ENCODE measurements at regions of chr11 and their contacts with region 1.

Region 1: GRCh38 chr11:97454988-97455387 is 1065.2 kb downstream of the JRKL start:
- DNase-seq: peak; percentile 21
- H3K4me3 ChIP-seq: no peak overlapping the region; a peak in 1 of 4 replicates
- H3K27ac ChIP-seq: no peak overlapping the region
- H3K4me1 ChIP-seq: no peaks in the 10 kb centered on the region
- H3K27me3 ChIP-seq: no peaks in the 10 kb centered on the region
- CTCF ChIP-seq: peak; percentile 66
- EP300 ChIP-seq: no peak
- RAD21 ChIP-seq: peak; percentile 84

Region 2: DNA sequence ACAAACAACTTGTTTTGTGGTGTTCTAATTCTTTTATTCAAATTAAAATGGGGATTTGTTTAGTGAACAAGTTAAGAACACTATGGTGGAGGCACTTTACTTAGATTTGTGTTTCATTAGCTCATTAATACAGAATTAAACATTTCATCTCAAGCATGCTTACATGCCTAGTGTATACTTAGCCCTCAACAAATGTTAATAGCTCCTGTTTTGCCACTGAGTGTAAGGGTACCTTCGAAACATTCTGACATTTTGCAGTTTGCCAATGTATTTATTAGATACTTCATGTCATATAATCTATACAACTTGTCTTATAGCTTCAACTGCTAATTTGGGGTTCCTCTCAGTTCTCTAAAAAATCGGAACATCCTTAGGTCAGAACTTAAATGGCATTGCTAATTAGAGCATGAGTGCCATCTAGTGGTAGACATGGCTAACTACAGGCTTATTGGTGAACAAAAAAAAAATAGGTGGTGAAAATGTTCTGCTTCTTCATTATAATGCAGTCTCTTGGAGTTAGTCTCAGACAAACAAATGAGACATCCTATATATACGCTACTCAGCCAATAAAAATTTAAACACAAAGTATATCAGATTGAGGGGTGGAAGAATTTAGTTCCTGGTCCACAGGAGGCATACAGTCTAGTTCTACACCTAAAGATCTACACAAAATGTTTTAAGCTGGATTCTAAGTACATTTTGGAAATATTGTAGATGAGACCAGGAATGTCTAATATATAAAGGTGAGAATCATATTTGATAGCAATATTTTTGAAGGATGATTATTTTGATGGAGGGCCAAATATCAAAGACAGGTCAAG is 1560.9 kb after region 1 on chr11:
- CTCF ChIA-PET with region 1: interaction called, 15 read pairs
- POLR2A ChIA-PET with region 1: no interaction called
- DNase-seq: peak; percentile 48
- H3K4me3 ChIP-seq: no peak overlapping the region; a peak in 1 of 4 replicates
- H3K27ac ChIP-seq: no peak overlapping the region
- H3K4me1 ChIP-seq: peaks cover 0 to 6% of the 10 kb centered on the region in 2 experiments; a peak in 1 of 4 replicates
- H3K27me3 ChIP-seq: peaks cover under 1% of the 10 kb centered on the region; the same call in 1 of the 2 replicates
- CTCF ChIP-seq: peak; percentile 96
- EP300 ChIP-seq: no peak
- RAD21 ChIP-seq: peak; percentile 86